ENCODE measurements at regions of chr12 and their contacts with region 1.

Region 1: GRCh38 chr12:57803319-57803893 is 15.1 kb downstream of the AVIL start:
- DNase-seq: peak; percentile 43
- H3K4me3 Mint-ChIP-seq: no peak overlapping the region
- H3K27ac Mint-ChIP-seq: no peak overlapping the region
- H3K4me1 Mint-ChIP-seq: no peaks in the 10 kb centered on the region
- H3K27me3 Mint-ChIP-seq: no peaks in the 10 kb centered on the region

Region 2: GRCh38 chr12:57657744-57658143 is 145.7 kb before region 1 on chr12:
- CTCF ChIA-PET with region 1: no interaction called
- POLR2A ChIA-PET with region 1: no interaction called
- intact Hi-C with region 1: no loop called
- DNase-seq: no peak
- H3K4me3 Mint-ChIP-seq: no peak overlapping the region
- H3K27ac Mint-ChIP-seq: no peak overlapping the region
- H3K4me1 Mint-ChIP-seq: no peaks in the 10 kb centered on the region
- H3K27me3 Mint-ChIP-seq: peaks cover 1% of the 10 kb centered on the region

Region 3: GRCh38 chr12:57813971-57814772 is 10.8 kb after region 1 on chr12:
- CTCF ChIA-PET with region 1: interaction called, 21 read pairs
- POLR2A ChIA-PET with region 1: interaction called, 4 read pairs
- intact Hi-C with region 1: no loop called
- DNase-seq: no peak
- H3K4me3 Mint-ChIP-seq: no peak overlapping the region
- H3K27ac Mint-ChIP-seq: no peak overlapping the region
- H3K4me1 Mint-ChIP-seq: no peaks in the 10 kb centered on the region
- H3K27me3 Mint-ChIP-seq: no peaks in the 10 kb centered on the region

Region 4: GRCh38 chr12:57836442-57837375 is 33.3 kb after region 1 on chr12:
- CTCF ChIA-PET with region 1: interaction called, 14 read pairs
- POLR2A ChIA-PET with region 1: no interaction called
- intact Hi-C with region 1: no loop called
- DNase-seq: peak; percentile 72
- H3K4me3 Mint-ChIP-seq: peak overlapping the region; percentile 48
- H3K27ac Mint-ChIP-seq: peak overlapping the region; percentile 86
- H3K4me1 Mint-ChIP-seq: peaks cover 93% of the 10 kb centered on the region
- H3K27me3 Mint-ChIP-seq: no peaks in the 10 kb centered on the region

Measured in activated CD4-positive, alpha-beta memory T cell treated with anti-CD3 and anti-CD28 coated beads for 36 hours (primary cell).